ENCODE measurements at regions of chr5 and their contacts with region 1.

Region 1: GRCh38 chr5:114449860-114450421 is 88.1 kb downstream of the KCNN2 start:
- DNase-seq: no peak
- H3K4me3 ChIP-seq: no peak overlapping the region
- H3K27ac ChIP-seq: no peak overlapping the region
- H3K4me1 ChIP-seq: no peaks in the 10 kb centered on the region
- H3K27me3 ChIP-seq: no peaks in the 10 kb centered on the region
- CTCF ChIP-seq: peak; percentile 81 to 98 (median 92)

Region 2: DNA sequence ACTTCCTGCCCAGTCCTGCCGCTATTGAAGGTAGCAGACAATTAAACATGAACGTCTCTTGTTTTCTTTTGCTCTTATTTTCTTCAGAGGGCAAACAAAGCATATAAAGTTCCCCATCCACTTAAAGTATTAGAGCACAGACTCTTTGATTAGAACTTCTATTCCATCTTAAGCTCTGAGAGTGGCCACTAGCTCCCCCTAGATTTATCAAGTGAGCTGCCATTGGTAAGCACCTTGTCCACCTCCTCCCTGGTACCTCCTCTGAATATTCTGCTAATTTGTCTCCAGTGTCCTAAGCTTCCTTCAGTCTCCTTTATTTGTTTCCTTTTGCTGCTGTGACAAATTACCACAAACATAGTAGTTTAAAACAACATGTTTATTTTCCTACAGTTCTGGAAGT is 352.4 kb before region 1 on chr5:
- dilution Hi-C with region 1: loop called (anchors 25 kb)
- DNase-seq: no peak
- H3K4me3 ChIP-seq: no peak overlapping the region
- H3K27ac ChIP-seq: no peak overlapping the region
- H3K4me1 ChIP-seq: no peaks in the 10 kb centered on the region
- H3K27me3 ChIP-seq: no peaks in the 10 kb centered on the region
- CTCF ChIP-seq: peak in 1 of 3 experiments; percentile 21

Region 3: GRCh38 chr5:114361724-114362196 is 88.2 kb before region 1 on chr5 and contains the start of gene KCNN2:
- dilution Hi-C with region 1: no loop called
- DNase-seq: no peak
- H3K4me3 ChIP-seq: peak within 1 kb of the TSS; percentile 39 to 59 (median 42)
- H3K27ac ChIP-seq: no peak within 1 kb of the TSS
- H3K4me1 ChIP-seq: no peaks in the 10 kb centered on the region
- H3K27me3 ChIP-seq: peaks cover 49% of the 10 kb centered on the region
- CTCF ChIP-seq: no peak
- polyA plus RNA-seq, gene KCNN2: 0.09 TPM in 2 of 3 replicates, not detected in the other